MCF 10A (cell line): ENCODE measurements at regions of chr13 and their contacts with region 1.

Region 1: DNA sequence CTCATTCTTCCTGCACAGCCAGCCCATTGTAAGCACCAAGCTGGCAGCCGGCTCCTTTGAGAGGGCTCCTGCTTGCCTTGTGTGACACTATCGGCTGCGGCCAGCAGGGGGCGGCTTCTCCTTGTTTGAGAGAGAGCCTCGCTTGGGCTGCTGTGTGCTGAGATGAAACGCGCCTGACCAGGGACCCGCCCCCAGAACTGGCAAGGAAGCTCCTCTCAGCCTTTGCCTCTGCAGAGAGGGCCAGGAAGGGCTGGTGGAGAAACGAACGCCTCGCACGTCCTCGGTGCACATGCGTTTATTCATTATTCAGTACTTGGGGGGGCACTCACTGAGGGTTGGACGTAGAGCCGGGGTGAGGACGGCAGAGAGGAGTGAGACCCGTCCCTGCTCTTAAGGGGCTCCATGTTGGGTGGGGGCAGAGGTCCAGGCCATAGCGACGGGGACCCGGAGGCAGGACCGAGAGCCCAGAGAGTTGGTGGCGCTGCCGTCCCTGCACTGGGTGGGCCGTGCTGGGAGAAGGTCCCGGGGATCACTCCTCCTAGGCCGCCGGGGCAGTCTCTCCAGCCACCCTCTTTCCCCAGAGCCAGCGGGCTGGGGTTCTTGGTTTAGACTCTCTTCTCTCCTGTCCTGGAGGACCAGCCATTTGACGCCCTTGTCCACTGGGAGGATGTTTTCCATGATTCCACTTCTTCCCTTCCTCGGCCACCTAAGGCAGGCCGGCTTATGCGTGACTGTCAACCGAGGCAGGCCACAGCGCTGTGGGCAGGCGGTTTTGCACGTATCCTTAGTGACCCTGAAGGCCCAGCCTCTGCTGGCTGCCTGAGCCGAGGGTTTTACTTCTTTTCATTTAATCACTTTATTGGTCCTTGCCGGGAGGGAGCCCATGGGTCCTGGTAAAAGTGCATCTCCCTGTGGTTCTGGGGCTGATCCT is 174.5 kb downstream of the KATNAL1 start:
- DNase-seq: peak; percentile 91
- H3K4me3 Mint-ChIP-seq: no peak overlapping the region
- H3K27ac Mint-ChIP-seq: peak overlapping the region; percentile 20
- H3K4me1 Mint-ChIP-seq: peaks cover 18% of the 10 kb centered on the region
- H3K27me3 Mint-ChIP-seq: no peaks in the 10 kb centered on the region
- CTCF ChIP-seq: peak; percentile 89

Region 2: DNA sequence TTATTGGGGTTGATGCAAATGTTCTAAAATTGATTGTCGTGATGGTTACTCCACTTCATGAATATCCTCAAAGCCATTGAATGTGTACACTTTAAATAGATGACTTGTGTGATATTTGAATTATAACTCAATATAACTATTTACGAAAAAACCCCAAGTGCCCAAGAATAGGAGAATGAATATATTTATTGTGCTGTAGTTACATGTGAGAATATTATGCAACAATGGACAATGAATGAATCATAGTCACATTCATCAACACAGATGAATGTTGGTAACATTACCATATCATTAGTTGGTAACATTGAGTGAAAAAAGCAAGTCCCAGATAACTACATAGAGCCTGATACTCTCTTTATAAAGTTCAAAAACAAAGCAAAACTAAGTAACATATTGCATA is 154.7 kb before region 1 on chr13:
- CTCF ChIA-PET with region 1: no interaction called
- POLR2A ChIA-PET with region 1: no interaction called
- intact Hi-C with region 1: no loop called
- DNase-seq: peak; percentile 13
- H3K4me3 Mint-ChIP-seq: no peak overlapping the region
- H3K27ac Mint-ChIP-seq: no peak overlapping the region
- H3K4me1 Mint-ChIP-seq: peaks cover 7% of the 10 kb centered on the region
- H3K27me3 Mint-ChIP-seq: no peaks in the 10 kb centered on the region
- CTCF ChIP-seq: no peak

Region 3: GRCh38 chr13:30158774-30159445 is 26.0 kb after region 1 on chr13:
- CTCF ChIA-PET with region 1: interaction called, 97 read pairs
- POLR2A ChIA-PET with region 1: no interaction called
- intact Hi-C with region 1: loop called (anchors 1 kb)
- DNase-seq: peak; percentile 42
- H3K4me3 Mint-ChIP-seq: no peak overlapping the region
- H3K27ac Mint-ChIP-seq: no peak overlapping the region
- H3K4me1 Mint-ChIP-seq: peaks cover 11% of the 10 kb centered on the region
- H3K27me3 Mint-ChIP-seq: no peaks in the 10 kb centered on the region
- CTCF ChIP-seq: peak; percentile 29

Region 4: GRCh38 chr13:30257468-30258099 is 124.7 kb after region 1 on chr13:
- CTCF ChIA-PET with region 1: interaction called, 10 read pairs
- POLR2A ChIA-PET with region 1: no interaction called
- intact Hi-C with region 1: no loop called
- DNase-seq: no peak
- H3K4me3 Mint-ChIP-seq: no peak overlapping the region
- H3K27ac Mint-ChIP-seq: no peak overlapping the region
- H3K4me1 Mint-ChIP-seq: no peaks in the 10 kb centered on the region
- H3K27me3 Mint-ChIP-seq: no peaks in the 10 kb centered on the region
- CTCF ChIP-seq: no peak

Region 5: GRCh38 chr13:30581582-30581981 is 448.7 kb after region 1 on chr13:
- CTCF ChIA-PET with region 1: interaction called, 5 read pairs
- POLR2A ChIA-PET with region 1: no interaction called
- intact Hi-C with region 1: loop called (anchors 2 kb)
- DNase-seq: peak; percentile 43
- H3K4me3 Mint-ChIP-seq: no peak overlapping the region
- H3K27ac Mint-ChIP-seq: no peak overlapping the region
- H3K4me1 Mint-ChIP-seq: peaks cover 26% of the 10 kb centered on the region
- H3K27me3 Mint-ChIP-seq: no peaks in the 10 kb centered on the region
- CTCF ChIP-seq: peak; percentile 18

Region 6: DNA sequence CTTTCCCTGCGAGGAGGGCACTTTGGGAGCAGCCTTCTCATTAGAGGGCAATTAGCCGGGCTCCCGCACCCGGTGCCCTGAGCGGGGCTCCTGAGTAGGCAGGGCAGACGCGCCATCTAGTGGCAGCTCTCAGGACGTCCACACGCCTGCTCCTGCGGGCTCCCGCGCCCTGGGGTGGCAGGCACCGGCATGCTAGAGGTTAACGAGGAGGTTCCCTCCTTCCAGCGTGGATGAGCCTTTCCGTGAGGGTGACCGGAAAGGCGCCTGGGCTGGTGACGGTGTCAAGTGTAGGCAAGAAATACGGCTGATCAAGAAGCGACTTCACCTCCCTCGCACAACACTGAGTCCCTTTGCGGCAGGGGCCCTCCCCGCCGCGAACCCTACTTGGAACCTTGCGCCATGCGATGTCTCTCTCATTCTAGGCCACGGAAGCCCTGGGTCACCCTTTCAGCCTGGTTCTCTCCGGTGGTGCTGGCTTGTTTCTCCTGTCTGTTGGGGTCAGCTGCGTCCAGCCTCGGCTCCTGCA is 670.1 kb after region 1 on chr13:
- CTCF ChIA-PET with region 1: interaction called, 6 read pairs
- POLR2A ChIA-PET with region 1: no interaction called
- intact Hi-C with region 1: loop called (anchors 1 kb)
- DNase-seq: peak; percentile 80
- H3K4me3 Mint-ChIP-seq: peak overlapping the region; percentile 68
- H3K27ac Mint-ChIP-seq: peak overlapping the region; percentile 7
- H3K4me1 Mint-ChIP-seq: peaks cover 11% of the 10 kb centered on the region
- H3K27me3 Mint-ChIP-seq: no peaks in the 10 kb centered on the region
- CTCF ChIP-seq: peak; percentile 96

Region 7: DNA sequence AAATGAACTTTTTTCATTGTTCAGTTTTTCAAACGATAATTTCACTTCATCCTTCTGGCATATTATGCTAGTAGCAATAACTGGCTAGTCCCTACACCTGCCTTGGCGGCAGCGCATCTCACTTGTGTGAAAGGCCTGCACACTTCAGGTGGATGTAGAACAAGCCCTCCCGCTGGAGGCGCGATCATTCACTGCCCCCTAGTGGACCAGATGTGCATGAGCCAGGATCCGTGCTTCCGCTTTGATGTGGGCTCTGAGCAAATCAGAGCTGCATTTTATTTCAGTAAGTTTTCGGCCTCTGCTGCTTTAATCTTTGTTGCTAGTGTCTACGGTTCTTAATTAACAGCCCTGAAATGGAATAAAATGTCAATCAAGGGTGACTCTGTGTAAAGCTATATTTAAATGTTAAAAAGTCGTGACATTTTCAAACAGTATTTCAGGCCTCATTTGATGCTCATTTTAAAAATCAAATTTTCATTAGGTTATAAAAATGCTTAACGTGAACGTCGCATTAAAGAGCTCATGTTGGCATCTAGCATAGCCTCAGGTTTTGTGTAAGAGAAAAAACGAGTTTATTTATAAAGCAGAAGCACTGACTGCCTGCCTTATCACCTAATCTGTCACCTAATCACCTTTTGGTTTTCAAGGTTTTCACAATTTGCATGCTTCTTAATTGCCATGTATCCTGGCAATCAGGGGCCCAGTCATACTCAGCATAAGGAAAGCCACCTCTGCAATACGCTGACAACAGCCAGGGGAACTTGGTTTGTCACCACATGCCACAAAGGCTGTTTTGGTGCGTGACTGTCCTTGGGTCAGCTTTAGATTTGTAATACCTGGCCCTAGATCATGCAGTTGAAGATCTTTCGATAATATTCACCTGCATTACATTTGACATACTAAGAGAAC is 911.7 kb after region 1 on chr13:
- CTCF ChIA-PET with region 1: interaction called, 3 read pairs
- POLR2A ChIA-PET with region 1: no interaction called
- intact Hi-C with region 1: loop called (anchors 5 kb)
- DNase-seq: peak; percentile 81
- H3K4me3 Mint-ChIP-seq: no peak overlapping the region
- H3K27ac Mint-ChIP-seq: peak overlapping the region; percentile 90
- H3K4me1 Mint-ChIP-seq: peaks cover 15% of the 10 kb centered on the region
- H3K27me3 Mint-ChIP-seq: no peaks in the 10 kb centered on the region
- CTCF ChIP-seq: peak; percentile 84